Gastrocnemius medialis (tissue), 4 donors: ENCODE measurements at regions of chr6 and their contacts with region 1.

Region 1: DNA sequence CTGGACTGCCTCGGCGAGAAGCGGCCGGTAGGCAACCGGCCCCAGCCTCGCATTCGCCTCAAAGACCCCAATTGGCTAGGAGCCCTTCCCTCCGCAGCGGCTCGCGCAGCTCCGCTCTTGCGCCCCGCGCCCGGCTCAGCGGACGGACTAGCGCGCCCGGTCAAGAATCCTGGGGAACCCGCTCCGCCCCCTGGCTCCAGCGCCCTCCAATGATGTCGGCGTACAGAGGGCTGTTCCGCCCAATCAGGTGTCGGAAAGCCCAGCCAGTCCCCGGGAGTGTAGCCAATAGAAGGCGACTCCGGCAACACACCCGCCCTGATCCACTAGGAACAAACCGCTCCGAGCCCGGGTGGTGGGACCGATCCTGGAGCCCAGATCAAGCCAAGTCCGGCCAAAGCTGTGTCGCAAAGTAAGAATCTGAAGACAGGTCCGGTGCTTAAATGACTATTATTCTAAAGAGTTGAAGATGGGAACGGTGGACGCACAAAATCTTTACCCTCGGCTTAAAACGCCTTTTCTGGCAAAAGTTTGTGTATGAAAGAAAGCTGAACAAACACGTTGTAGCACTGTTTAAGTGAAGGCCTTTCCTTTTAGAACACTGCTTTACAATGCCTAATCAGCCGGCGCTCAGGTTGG is 132.2 kb downstream of the OGFRL1 start:
- DNase-seq: peak; percentile 97 to 98
- ATAC-seq: peak; percentile 92 to 93
- H3K4me3 ChIP-seq: peak overlapping the region; percentile 85 to 95 (median 87)
- H3K27ac ChIP-seq: peak overlapping the region; percentile 96 to 98 (median 98)
- H3K4me1 ChIP-seq: peaks cover 15 to 26% of the 10 kb centered on the region in 2 donors
- H3K27me3 ChIP-seq: no peaks in the 10 kb centered on the region
- CTCF ChIP-seq: peak in 1 of 5 experiments; percentile 11
- POLR2A ChIP-seq: peak; percentile 98 to 99

Region 2: DNA sequence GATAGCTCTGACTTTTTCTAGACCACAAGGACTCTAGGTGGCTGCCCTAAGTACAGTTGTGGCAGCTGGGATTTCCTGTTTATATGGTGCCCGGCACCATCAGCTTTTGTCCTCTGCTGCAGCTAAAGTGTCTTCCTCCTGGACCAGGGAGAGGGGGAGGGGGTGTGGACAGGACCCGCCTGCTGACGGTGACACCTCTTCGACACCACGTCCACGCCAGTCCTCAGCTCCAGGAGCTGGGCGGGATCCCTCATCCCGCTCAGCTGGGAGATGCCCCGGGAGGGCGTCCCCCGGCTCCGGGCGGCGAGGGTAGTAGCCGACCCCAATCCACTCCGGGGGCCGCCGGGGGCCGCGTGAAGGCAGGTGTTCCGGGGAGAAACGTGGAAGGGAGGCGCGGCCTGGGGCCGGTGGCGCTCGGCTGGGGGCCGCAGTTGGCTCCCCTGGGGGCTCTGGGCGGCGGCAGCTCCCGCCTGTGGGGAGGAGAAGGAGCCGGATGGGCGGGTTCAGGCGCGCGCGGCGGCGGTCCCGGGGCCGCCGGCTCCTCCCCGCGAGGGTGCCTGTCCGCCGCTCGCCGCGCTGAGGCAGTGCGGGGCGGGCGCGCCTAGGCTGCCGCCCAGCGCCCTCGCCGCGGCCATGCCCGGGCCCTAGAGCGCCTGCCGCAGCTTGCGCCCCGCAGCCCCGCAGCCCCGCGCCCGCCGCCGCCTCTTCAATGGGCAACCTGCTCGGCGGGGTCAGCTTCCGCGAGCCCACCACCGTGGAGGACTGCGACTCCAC is 132.4 kb before region 1 on chr6 and contains the start of gene OGFRL1:
- in situ Hi-C with region 1: no loop called
- intact Hi-C with region 1: loop called (anchors 5 kb)
- DNase-seq: peak; percentile 56 to 63
- ATAC-seq: peak; percentile 76 to 82
- H3K4me3 ChIP-seq: peak within 1 kb of the TSS; percentile 70 to 72 (median 71)
- H3K27ac ChIP-seq: peak within 1 kb of the TSS; percentile 79 to 87 (median 84)
- H3K4me1 ChIP-seq: peaks cover 13 to 63% of the 10 kb centered on the region in 2 donors
- H3K27me3 ChIP-seq: no peaks in the 10 kb centered on the region
- CTCF ChIP-seq: peak in 3 of 5 experiments; percentile 13 to 46 (median 17)
- POLR2A ChIP-seq: peak; percentile 72 to 79
- total RNA-seq, gene OGFRL1: 4.6 to 18.0 (median 6.8) TPM

Region 3: GRCh38 chr6:71375676-71376075 is 45.1 kb before region 1 on chr6:
- in situ Hi-C with region 1: loop called in 1 of 4 experiments (anchors 10 kb)
- intact Hi-C with region 1: no loop called
- DNase-seq: no peak
- ATAC-seq: peak; percentile 58 to 64
- H3K4me3 ChIP-seq: no peak overlapping the region
- H3K27ac ChIP-seq: peak overlapping the region in 1 of 4 donors; percentile 25
- H3K4me1 ChIP-seq: peaks cover 8 to 26% of the 10 kb centered on the region in 2 donors
- H3K27me3 ChIP-seq: no peaks in the 10 kb centered on the region
- CTCF ChIP-seq: no peak
- POLR2A ChIP-seq: no peak

Region 4: GRCh38 chr6:71544028-71544427 is 123.2 kb after region 1 on chr6:
- in situ Hi-C with region 1: no loop called
- intact Hi-C with region 1: no loop called
- DNase-seq: no peak
- ATAC-seq: no peak
- H3K4me3 ChIP-seq: no peak overlapping the region
- H3K27ac ChIP-seq: no peak overlapping the region
- H3K4me1 ChIP-seq: no peaks in the 10 kb centered on the region
- H3K27me3 ChIP-seq: no peaks in the 10 kb centered on the region
- CTCF ChIP-seq: no peak
- POLR2A ChIP-seq: no peak